Activated T-helper 1 cell treated with anti-CD3 and anti-CD28 coated beads, Interleukin-12 subunit alpha, Interleukin-12 subunit beta, Interleukin-2, Interleukin-4 antibody, amounts not matched to agents 30 ng/mL and 10 ng/mL and 1 ng/mL, durations not matched to agents 14 hours and 24 hours and 36 hours (primary cell): ENCODE measurements at regions of chr12 and their contacts with region 1.

Region 1: GRCh38 chr12:25052196-25052913 is 103.5 kb upstream of the BCAT1 start:
- DNase-seq: peak; percentile 43
- H3K4me3 Mint-ChIP-seq: peak overlapping the region; percentile 92
- H3K27ac Mint-ChIP-seq: peak overlapping the region; percentile 99
- H3K4me1 Mint-ChIP-seq: peaks cover 56% of the 10 kb centered on the region
- H3K27me3 Mint-ChIP-seq: peaks cover 4% of the 10 kb centered on the region

Region 2: DNA sequence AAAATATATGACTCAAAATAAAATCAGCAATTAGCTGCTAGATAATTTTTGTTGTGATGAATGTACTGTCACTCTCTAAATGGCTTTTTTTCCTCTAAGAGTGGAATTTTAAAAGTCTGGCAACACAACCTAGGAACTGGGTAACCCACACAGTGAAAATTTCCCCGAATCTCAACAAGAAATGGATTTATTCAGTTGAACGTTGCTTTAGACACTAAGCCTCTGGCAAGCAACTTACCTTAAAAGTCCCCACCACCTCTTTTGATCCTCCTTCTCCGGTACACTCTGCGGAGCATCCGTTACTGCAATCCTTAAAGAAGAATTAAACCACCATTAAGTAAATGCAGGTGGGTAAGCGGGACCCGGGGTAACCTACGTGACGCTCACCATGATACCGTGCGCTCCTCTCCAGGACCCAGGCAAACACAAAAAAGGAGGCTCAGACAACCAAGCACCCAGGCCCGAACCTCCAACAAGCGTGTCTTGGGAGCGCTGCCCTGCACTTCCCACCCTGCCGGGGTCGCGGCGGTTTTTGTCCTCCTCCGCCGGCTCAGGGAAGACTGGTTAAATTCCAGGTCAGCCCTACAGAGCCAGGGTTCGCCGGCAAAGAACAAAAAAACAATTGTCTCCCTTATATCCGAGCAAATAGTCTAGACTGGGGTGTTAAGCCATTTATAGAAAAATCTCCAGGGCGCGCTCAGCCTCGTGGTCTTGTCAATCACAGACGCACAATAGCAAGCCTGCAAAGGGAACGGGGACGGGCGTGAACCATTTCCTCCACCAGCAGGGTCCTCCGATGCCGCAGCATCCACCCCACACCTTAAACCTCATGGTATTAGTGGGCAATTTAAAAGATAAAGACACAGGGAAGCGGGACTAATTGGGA is 150.5 kb before region 1 on chr12:
- intact Hi-C with region 1: loop called (anchors 1 kb)
- DNase-seq: peak; percentile 11
- H3K4me3 Mint-ChIP-seq: peak overlapping the region; percentile 99
- H3K27ac Mint-ChIP-seq: peak overlapping the region; percentile 99
- H3K4me1 Mint-ChIP-seq: peaks cover 45% of the 10 kb centered on the region
- H3K27me3 Mint-ChIP-seq: peaks cover 5% of the 10 kb centered on the region

Region 3: DNA sequence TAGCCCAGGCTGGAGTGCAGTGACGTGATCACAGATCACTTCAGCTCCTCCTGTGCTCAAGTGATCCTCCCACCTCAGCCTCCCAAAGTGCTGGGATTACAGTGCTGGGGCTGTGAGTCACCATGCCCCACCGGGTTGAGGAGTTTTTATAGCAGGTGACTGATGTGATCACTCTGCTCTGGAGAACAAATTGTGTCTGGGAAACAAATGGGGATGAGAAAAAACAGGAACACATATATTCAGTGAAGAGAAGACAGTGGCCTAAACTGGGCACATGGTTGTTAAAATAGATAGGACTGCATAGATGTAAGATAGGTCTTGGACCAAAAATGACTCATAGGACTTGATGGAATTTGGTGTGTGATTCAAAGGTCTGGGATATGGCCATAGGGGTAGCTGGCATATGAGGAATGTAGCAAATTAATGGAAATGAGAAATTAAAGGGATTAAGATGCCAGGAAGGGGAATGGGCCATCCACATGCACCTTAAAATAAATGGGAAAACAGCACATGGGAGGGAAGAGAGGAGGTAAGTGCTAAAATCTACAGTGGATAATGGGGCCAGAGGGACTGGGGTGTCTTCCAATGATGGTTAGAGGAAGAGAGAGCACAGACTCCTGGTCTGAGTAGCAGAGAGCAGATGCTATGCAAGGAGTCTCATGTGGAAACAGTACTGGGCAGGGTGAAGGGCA is 114.7 kb before region 1 on chr12:
- intact Hi-C with region 1: no loop called
- DNase-seq: no peak
- H3K4me3 Mint-ChIP-seq: no peak overlapping the region
- H3K27ac Mint-ChIP-seq: no peak overlapping the region
- H3K4me1 Mint-ChIP-seq: peaks cover 9% of the 10 kb centered on the region
- H3K27me3 Mint-ChIP-seq: peaks cover 9% of the 10 kb centered on the region

Region 4: GRCh38 chr12:25063873-25064628 is 11.7 kb after region 1 on chr12:
- intact Hi-C with region 1: loop called (anchors 1 kb)
- DNase-seq: no peak
- H3K4me3 Mint-ChIP-seq: peak overlapping the region; percentile 3
- H3K27ac Mint-ChIP-seq: peak overlapping the region; percentile 19
- H3K4me1 Mint-ChIP-seq: peaks cover 56% of the 10 kb centered on the region
- H3K27me3 Mint-ChIP-seq: no peaks in the 10 kb centered on the region

Region 5: GRCh38 chr12:25195056-25195971 is 143.0 kb after region 1 on chr12 and contains the starts of genes DNAI7 and ETFRF1:
- intact Hi-C with region 1: loop called (anchors 1 kb)
- DNase-seq: peak; percentile 92
- H3K4me3 Mint-ChIP-seq: peak within 1 kb of the TSS; percentile 98
- H3K27ac Mint-ChIP-seq: peak within 1 kb of the TSS; percentile 95
- H3K4me1 Mint-ChIP-seq: peaks cover 23% of the 10 kb centered on the region
- H3K27me3 Mint-ChIP-seq: peaks cover 2% of the 10 kb centered on the region
- total RNA-seq, gene DNAI7: 0.23 TPM in 1 of 2 replicates, not detected in the other
- total RNA-seq, gene ETFRF1: 9.7 and 10.4 TPM in 2 replicates

Region 6: GRCh38 chr12:25364529-25365339 is 312.4 kb after region 1 on chr12:
- intact Hi-C with region 1: loop called (anchors 1 kb)
- DNase-seq: no peak
- H3K4me3 Mint-ChIP-seq: peak overlapping the region; percentile 36
- H3K27ac Mint-ChIP-seq: peak overlapping the region; percentile 94
- H3K4me1 Mint-ChIP-seq: peaks cover 45% of the 10 kb centered on the region
- H3K27me3 Mint-ChIP-seq: peaks cover 5% of the 10 kb centered on the region

Region 7: GRCh38 chr12:26937875-26938700 is 1885.7 kb after region 1 on chr12 and contains the starts of genes FGFR1OP2 and INTS13:
- intact Hi-C with region 1: loop called (anchors 5 kb)
- DNase-seq: peak; percentile 97
- H3K4me3 Mint-ChIP-seq: peak within 1 kb of the TSS; percentile 96
- H3K27ac Mint-ChIP-seq: peak within 1 kb of the TSS; percentile 96
- H3K4me1 Mint-ChIP-seq: peaks cover 82% of the 10 kb centered on the region
- H3K27me3 Mint-ChIP-seq: no peaks in the 10 kb centered on the region
- total RNA-seq, gene FGFR1OP2: 48.3 and 49.9 TPM in 2 replicates
- total RNA-seq, gene INTS13: 43.8 and 52.2 TPM in 2 replicates